Esophagus muscularis mucosa (tissue), 4 donors: ENCODE measurements at regions of chr10 and their contacts with region 1.

Region 1: DNA sequence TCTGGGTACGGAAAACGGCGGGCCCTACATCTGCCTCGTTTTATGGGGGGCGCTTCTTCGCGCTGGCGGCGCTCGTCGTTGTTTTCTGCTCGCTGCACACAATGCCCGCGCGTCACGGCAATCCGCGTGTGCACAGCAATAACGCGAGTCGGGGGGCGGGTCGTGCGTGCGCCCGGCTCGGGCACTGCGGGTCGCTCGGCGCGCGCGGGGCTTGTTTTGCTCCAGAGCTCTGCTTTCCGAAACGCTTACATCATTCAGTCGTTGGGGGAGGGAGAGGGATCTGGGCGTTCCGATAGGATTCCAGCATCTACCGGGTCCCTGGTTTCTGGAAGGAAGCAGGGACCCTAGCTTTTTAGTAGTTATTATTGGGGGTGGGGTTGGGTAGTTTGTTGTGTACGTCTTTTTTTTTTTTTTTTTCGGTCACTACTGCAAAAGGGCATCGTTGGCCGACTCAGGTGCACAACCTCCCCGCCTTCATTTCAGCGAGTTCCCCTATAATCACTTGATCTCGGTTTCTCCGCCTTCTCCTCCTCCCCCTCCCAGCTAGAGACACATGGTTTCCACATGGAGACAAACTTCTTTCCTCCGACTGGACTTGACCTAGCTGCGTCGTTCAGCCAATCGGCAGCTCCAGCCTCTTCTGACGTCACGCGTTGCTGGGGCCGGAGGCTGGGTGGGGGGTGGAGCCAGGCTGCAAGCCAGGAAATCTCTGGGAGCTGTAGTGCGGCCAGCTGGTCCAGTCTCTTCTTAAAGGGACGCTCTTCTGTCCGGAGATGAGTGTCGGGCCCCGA is 3.5 kb downstream of the MXI1 start:
- DNase-seq: peak; percentile 99
- H3K4me3 ChIP-seq: peak overlapping the region; percentile 80 to 91 (median 86)
- H3K27ac ChIP-seq: peak overlapping the region; percentile 94 to 100 (median 98)
- H3K4me1 ChIP-seq: peaks cover 42 to 54% (median 53%) of the 10 kb centered on the region in 4 donors
- H3K27me3 ChIP-seq: no peaks in the 10 kb centered on the region
- CTCF ChIP-seq: no peak
- EP300 ChIP-seq: peak; percentile 47
- POLR2A ChIP-seq: peak; percentile 64

Region 2: DNA sequence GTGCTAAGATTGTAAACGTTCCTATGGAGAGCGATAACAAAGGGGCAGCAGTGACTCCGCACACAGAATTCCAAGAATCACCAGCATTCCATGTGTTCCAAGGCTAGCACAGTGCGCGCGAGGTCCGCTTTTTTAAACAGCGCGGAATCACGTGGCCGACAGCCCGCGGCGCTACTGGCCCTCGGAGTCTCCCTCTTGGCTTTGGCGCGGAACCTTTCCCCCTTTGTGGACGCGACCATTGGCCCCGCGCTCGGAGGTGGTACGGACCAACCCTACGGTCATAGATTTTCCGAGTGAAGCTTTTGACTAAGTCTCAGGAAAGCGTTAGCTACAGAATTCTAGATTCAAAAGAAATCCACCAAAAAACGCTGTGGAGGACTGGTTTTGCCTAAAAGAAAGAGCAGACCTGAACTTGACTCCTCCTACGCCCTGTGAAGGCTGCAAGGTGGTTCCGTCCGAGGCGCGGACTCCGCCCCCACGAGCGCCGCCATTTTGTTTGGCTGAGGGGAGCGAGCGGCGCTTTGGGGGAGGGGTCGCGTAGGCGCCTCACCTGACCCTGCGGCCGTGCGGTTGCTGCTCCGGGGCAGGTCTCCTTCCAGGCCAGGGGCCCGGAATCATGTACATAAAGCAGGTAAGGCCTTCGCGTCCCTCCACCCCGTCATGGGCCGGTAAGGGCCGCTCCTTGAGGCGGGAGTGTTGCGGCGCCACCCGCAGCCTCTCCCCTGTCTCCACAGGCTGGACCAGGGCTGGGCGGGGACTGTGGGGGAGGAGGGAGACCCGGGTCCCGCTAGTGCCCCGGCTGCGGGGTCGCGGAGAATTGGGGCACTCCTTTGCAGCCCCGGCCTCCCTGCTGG is 356.6 kb after region 1 on chr10 and contains the start of gene SMC3:
- intact Hi-C with region 1: loop called (anchors 10 kb)
- DNase-seq: peak; percentile 98
- H3K4me3 ChIP-seq: peak within 1 kb of the TSS; percentile 78 to 98 (median 84)
- H3K27ac ChIP-seq: peak within 1 kb of the TSS; percentile 88 to 92 (median 90)
- H3K4me1 ChIP-seq: peaks cover 27 to 54% (median 47%) of the 10 kb centered on the region in 4 donors
- H3K27me3 ChIP-seq: no peaks in the 10 kb centered on the region
- CTCF ChIP-seq: no peak
- EP300 ChIP-seq: no peak
- POLR2A ChIP-seq: peak; percentile 48
- total RNA-seq, gene SMC3: 27.7 to 50.2 (median 39.5) TPM